ENCODE measurements at regions of chr7 and their contacts with region 1.

Region 1: DNA sequence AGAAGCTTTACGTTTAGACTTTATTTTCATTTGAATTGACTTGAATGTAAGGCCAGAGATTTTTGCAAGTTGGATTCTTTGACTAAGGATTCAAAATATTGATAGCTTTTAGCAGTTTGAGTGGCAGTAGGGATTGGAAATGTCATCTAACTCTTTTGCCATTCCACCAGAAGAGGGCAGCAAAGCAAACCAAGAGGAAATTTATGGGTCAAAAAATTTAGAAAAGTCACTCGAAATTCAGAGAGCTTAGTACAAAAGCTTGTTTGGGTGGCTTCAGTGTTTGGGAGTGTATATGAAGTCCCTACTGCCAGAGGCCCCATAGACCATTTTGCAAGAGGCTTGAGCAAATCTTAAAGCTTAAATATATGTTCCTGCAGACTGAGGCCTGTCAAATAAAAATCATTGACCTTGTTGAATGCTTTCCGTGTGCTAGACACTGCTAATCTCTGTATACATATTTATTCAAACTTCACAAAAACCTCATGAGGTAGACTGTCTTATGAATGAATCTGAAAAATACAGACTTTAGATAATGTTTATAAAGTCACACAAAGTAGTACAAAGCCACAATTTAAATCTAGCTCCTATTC is 44.6 kb upstream of the RSBN1L start:
- DNase-seq: peak; percentile 53 to 72 (median 56)
- ATAC-seq: peak; percentile 71
- H3K4me3 ChIP-seq: no peak overlapping the region
- H3K27ac ChIP-seq: no peak overlapping the region
- H3K4me1 ChIP-seq: no peaks in the 10 kb centered on the region
- H3K27me3 ChIP-seq: no peaks in the 10 kb centered on the region
- CTCF ChIP-seq: peak; percentile 53 to 84 (median 70); a peak in 5 of 6 replicates
- EP300 ChIP-seq: no peak
- POLR2A ChIP-seq: no peak
- RAD21 ChIP-seq: peak; percentile 63 to 76

Region 2: DNA sequence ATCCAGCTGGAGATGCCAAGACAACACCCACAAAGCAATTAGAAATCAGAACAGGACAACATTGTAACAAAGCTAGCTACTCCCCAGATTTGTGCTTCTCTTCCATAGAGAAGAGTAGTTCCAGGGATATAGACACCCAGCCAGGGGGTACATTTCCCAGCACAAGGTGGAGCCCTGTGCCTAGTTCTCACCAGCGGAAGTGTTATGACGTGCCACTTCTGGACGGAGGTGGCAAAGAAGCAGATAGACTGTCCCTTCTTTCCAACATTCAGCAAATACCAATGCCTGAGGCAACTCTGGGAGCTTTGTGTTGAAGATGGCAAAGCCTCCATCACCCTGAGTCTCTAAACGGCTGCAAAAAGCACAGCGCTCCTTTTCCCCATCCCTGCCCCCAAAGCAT is 212.1 kb before region 1 on chr7:
- CTCF ChIA-PET with region 1: no interaction called
- POLR2A ChIA-PET with region 1: no interaction called
- in situ Hi-C with region 1: no loop called
- intact Hi-C with region 1: loop called (anchors 5 kb)
- DNase-seq: peak in 1 of 4 experiments; percentile 25
- ATAC-seq: peak; percentile 69
- H3K4me3 ChIP-seq: no peak overlapping the region
- H3K27ac ChIP-seq: no peak overlapping the region
- H3K4me1 ChIP-seq: no peaks in the 10 kb centered on the region
- H3K27me3 ChIP-seq: peaks cover 21 to 26% of the 10 kb centered on the region in 2 experiments; a peak in 4 of 5 replicates
- CTCF ChIP-seq: peak; percentile 17 to 47 (median 45); a peak in 5 of 6 replicates
- EP300 ChIP-seq: no peak
- POLR2A ChIP-seq: no peak
- RAD21 ChIP-seq: peak; percentile 45 to 62

Region 3: GRCh38 chr7:77536413-77537135 is 115.1 kb before region 1 on chr7:
- CTCF ChIA-PET with region 1: no interaction called
- POLR2A ChIA-PET with region 1: no interaction called
- in situ Hi-C with region 1: no loop called
- intact Hi-C with region 1: loop called (anchors 5 kb)
- DNase-seq: peak; percentile 98 to 99 (median 99)
- ATAC-seq: peak; percentile 93
- H3K4me3 ChIP-seq: peak overlapping the region; percentile 80
- H3K27ac ChIP-seq: peak overlapping the region; percentile 88
- H3K4me1 ChIP-seq: peaks cover 10 to 21% of the 10 kb centered on the region in 2 experiments
- H3K27me3 ChIP-seq: no peaks in the 10 kb centered on the region
- CTCF ChIP-seq: no peak
- EP300 ChIP-seq: no peak
- POLR2A ChIP-seq: peak; percentile 98
- RAD21 ChIP-seq: peak in 1 of 2 experiments; percentile 8; a peak in 1 of 4 replicates

Region 4: DNA sequence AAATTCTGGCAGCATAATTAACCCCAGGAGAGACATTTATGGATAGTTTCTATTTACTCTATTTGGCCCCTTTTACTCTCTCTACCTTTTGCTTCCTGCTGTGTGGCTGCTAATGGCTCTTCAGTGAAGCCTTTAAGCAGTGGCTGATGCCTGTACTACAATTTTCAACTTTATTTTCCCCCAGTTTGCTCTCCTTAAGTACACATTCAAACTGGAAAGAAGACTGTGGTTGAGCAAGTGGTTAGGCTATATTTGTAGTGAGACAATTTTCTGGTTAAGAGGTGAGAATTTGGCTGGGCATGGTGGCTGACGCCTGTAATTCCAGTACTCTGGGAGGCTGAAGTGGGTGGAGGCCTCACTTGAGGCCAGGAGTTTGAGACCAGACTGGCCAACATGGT is 36.1 kb after region 1 on chr7:
- CTCF ChIA-PET with region 1: no interaction called
- POLR2A ChIA-PET with region 1: no interaction called
- in situ Hi-C with region 1: no loop called
- intact Hi-C with region 1: no loop called
- DNase-seq: no peak
- ATAC-seq: no peak
- H3K4me3 ChIP-seq: no peak overlapping the region
- H3K27ac ChIP-seq: no peak overlapping the region
- H3K4me1 ChIP-seq: peaks cover 2 to 14% of the 10 kb centered on the region in 2 experiments; a peak in 4 of 5 replicates
- H3K27me3 ChIP-seq: no peaks in the 10 kb centered on the region
- CTCF ChIP-seq: no peak
- EP300 ChIP-seq: no peak
- POLR2A ChIP-seq: no peak
- RAD21 ChIP-seq: no peak